ENCODE measurements at regions of chr9 and their contacts with region 1.

Region 1: GRCh38 chr9:122742003-122742402 is at the start of gene OR1L6:
- DNase-seq: no peak
- ATAC-seq: no peak
- H3K4me3 ChIP-seq: no peak within 1 kb of the TSS
- H3K27ac ChIP-seq: no peak within 1 kb of the TSS
- H3K4me1 ChIP-seq: no peaks in the 10 kb centered on the region
- H3K27me3 ChIP-seq: peaks cover 12% of the 10 kb centered on the region
- CTCF ChIP-seq: no peak
- POLR2A ChIP-seq: no peak
- RAD21 ChIP-seq: no peak
- total RNA-seq, gene OR1L6: not detected in 2 replicates

Region 2: DNA sequence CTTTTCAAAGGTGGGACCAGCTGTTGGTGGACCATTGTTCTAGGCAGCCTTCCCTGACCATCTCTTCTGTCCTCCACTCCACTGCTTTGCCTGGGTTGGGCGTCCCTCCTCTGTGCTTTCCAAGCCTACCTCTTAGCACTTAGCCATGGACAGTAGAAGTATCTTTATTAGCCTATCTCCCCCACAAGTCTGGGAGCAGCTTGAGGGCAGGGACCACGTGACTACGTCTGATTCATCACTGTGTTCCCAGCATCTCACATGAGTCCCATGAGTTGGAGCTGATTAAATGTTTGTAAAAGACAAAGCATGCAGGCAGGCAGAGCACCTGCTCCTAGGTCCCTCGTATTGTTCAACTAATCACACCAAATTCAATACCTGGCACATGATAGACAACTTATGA is 561.4 kb before region 1 on chr9:
- CTCF ChIA-PET with region 1: no interaction called
- POLR2A ChIA-PET with region 1: no interaction called
- dilution Hi-C with region 1: no loop called
- in situ Hi-C with region 1: no loop called
- intact Hi-C with region 1: no loop called
- DNase-seq: peak; percentile 88
- ATAC-seq: peak; percentile 95
- H3K4me3 ChIP-seq: no peak overlapping the region
- H3K27ac ChIP-seq: no peak overlapping the region
- H3K4me1 ChIP-seq: 0 out of 2 replicates have a peak, but pooled peaks cover 4% of the 10 kb centered on the region
- H3K27me3 ChIP-seq: peaks cover 37% of the 10 kb centered on the region
- CTCF ChIP-seq: no peak
- POLR2A ChIP-seq: no peak
- RAD21 ChIP-seq: no peak

Region 3: GRCh38 chr9:122719218-122719617 is 22.8 kb before region 1 on chr9:
- CTCF ChIA-PET with region 1: interaction called, 3 read pairs
- POLR2A ChIA-PET with region 1: no interaction called
- dilution Hi-C with region 1: no loop called
- in situ Hi-C with region 1: no loop called
- intact Hi-C with region 1: loop called (anchors 2 kb)
- DNase-seq: no peak
- ATAC-seq: no peak
- H3K4me3 ChIP-seq: no peak overlapping the region
- H3K27ac ChIP-seq: no peak overlapping the region
- H3K4me1 ChIP-seq: no peaks in the 10 kb centered on the region
- H3K27me3 ChIP-seq: no peaks in the 10 kb centered on the region
- CTCF ChIP-seq: no peak
- POLR2A ChIP-seq: no peak
- RAD21 ChIP-seq: no peak